ENCODE measurements at regions of chr12 and their contacts with region 1.

Region 1: DNA sequence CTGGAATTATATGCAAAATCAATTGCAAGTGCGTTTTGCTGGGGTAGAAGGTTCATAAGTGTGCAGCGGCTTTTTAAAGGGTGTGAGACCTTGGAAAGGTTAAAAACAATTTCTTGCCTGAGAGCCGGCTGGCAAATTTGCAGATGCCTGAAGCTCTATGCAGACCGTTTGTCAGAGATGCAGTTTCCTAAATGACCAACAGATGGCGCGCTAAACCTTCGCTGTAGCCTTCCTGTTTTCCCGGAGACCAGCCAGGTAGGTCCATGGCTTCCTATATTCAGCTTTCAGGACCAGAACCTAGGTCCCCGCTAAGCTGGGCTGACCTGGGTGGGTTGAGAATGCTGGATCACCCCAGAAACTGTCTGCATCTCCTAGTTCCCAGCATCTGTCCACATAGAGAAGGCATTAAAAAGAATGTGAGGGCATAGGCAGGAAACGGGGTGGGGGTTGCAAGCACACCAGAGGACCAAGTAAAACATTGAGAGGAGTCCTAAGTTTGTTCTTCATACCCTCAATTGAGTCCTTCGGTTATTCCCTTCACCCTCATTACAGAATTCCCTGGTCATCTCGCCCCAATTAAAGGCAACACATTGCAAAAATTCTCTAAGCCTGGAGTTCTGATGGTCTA is 5.7 kb upstream of the NOS1 start:
- H3K4me3 ChIP-seq: no peak overlapping the region
- H3K27ac ChIP-seq: no peak overlapping the region
- H3K4me1 ChIP-seq: no peaks in the 10 kb centered on the region
- CTCF ChIP-seq: peak; percentile 60

Region 2: DNA sequence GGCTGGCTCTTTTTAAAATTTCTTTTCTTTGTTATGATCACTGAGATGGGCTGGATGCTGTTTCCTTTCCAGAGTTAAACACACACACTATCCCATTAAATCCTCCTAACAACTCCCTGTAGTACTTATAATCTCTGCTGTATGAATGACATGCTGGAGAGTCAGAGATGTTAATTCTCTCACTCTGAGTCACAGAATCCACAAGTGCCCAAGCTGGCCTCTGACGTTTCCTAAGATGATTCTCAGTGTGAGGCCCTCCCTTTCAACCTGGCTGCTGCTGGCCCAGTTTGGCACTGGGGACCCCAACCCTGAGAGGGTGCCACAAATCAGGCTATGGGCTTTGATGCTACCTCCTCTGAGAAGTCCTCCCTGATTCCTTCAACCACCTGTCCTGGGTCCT is 11.1 kb before region 1 on chr12:
- CTCF ChIA-PET with region 1: interaction called, 13 read pairs
- POLR2A ChIA-PET with region 1: no interaction called
- H3K4me3 ChIP-seq: no peak overlapping the region
- H3K27ac ChIP-seq: no peak overlapping the region
- H3K4me1 ChIP-seq: no peaks in the 10 kb centered on the region
- CTCF ChIP-seq: no peak

Region 3: DNA sequence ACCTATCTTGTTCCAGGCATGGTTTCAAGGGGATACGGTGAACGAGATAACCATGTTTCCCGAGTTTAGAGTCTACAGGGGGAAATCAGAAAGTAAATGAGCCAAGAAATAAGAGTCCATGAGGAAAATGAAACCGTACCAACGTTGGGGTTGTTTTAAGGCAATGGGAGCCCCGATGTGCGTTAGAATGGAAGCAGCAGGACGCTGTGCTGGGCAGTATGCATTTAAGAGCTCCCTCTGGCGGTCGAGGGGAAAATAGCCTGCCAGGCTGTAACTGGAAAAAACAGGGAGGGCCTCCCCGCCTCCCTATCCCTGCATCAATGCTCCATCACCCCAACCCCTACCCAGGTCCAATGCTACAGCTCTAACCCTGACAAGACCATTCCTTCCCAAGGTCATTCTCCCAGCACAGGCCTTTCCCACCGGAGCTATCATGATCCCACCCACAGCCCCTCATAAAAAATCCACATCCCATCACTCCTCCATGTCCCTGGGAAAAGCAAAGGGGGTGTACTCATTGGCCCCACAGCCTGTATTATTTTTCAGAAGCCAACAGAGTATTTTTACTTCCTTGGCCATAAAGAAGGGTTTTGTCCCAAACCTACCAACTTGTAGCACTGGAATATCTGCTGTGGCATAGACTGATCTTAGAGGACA is 220.6 kb after region 1 on chr12:
- CTCF ChIA-PET with region 1: interaction called, 108 read pairs
- POLR2A ChIA-PET with region 1: no interaction called
- H3K4me3 ChIP-seq: no peak overlapping the region
- H3K27ac ChIP-seq: no peak overlapping the region
- H3K4me1 ChIP-seq: no peaks in the 10 kb centered on the region
- CTCF ChIP-seq: peak; percentile 77

Region 4: GRCh38 chr12:117836999-117837736 is 470.0 kb after region 1 on chr12:
- CTCF ChIA-PET with region 1: interaction called, 125 read pairs
- POLR2A ChIA-PET with region 1: no interaction called
- H3K4me3 ChIP-seq: no peak overlapping the region
- H3K27ac ChIP-seq: no peak overlapping the region
- H3K4me1 ChIP-seq: no peaks in the 10 kb centered on the region
- CTCF ChIP-seq: peak; percentile 86

Region 5: GRCh38 chr12:117857632-117858612 is 490.8 kb after region 1 on chr12:
- CTCF ChIA-PET with region 1: interaction called, 33 read pairs
- POLR2A ChIA-PET with region 1: no interaction called
- H3K4me3 ChIP-seq: no peak overlapping the region
- H3K27ac ChIP-seq: no peak overlapping the region
- H3K4me1 ChIP-seq: no peaks in the 10 kb centered on the region
- CTCF ChIP-seq: 0 out of 2 replicates have a peak, but pooled peaks have one; percentile 27